Colonic mucosa (tissue), 4 donors: ENCODE measurements at regions of chr3 and their contacts with region 1.

Region 1: GRCh38 chr3:142828703-142829305 is 60.1 kb downstream of the PCOLCE2 start:
- DNase-seq: peak; percentile 84
- H3K4me3 ChIP-seq: no peak overlapping the region
- H3K27ac ChIP-seq: no peak overlapping the region
- H3K4me1 ChIP-seq: no peaks in the 10 kb centered on the region
- H3K27me3 ChIP-seq: no peaks in the 10 kb centered on the region
- CTCF ChIP-seq: peak; percentile 84

Region 2: GRCh38 chr3:142586803-142587406 is 241.9 kb before region 1 on chr3:
- intact Hi-C with region 1: loop called (anchors 10 kb)
- DNase-seq: peak; percentile 59
- H3K4me3 ChIP-seq: no peak overlapping the region
- H3K27ac ChIP-seq: no peak overlapping the region
- H3K4me1 ChIP-seq: no peaks in the 10 kb centered on the region
- H3K27me3 ChIP-seq: no peaks in the 10 kb centered on the region
- CTCF ChIP-seq: peak; percentile 68